ENCODE measurements at regions of chr2 and their contacts with region 1.

Region 1: DNA sequence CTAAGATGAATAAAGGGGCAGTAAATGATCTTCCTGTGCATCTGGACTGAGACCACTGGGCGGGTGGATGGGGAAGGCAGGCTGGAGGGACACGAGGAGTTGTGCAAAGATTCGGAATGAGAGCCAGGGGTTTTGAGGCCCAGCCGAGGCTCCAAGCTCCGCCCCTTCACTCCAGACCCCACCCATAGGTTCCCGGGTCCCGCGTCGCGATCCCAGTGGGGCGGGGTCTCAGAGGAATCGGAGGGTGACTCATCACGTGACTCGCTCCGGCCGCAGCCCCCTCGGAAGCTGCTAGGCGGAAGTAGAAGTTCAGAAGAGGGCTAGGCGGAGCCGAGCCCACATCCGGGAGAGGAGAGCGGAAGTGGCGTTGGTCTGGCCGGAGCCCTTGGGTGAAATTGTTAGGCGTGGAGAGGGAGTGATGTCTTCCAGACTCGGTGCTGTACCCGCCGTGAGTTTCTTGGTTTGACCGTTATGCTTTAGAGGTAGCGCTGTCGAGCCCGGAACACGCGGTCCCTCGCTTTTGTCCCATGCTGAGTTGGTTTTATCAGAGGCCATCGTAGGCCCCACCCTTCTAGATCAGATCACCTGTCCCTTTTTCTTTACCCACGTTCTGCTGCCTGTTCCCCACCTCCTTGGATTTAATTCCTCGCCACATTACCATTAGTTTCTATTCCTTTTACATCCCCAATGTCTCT is at the start of gene ZNF512:
- DNase-seq: peak; percentile 94
- H3K4me3 Mint-ChIP-seq: peak within 1 kb of the TSS; percentile 92
- H3K27ac Mint-ChIP-seq: peak within 1 kb of the TSS; percentile 88
- H3K4me1 Mint-ChIP-seq: peaks cover 43% of the 10 kb centered on the region
- H3K27me3 Mint-ChIP-seq: peaks cover 3% of the 10 kb centered on the region
- total RNA-seq, gene ZNF512: 29.0 and 32.7 TPM in 2 replicates

Region 2: GRCh38 chr2:27489498-27490397 is 93.1 kb before region 1 on chr2 and contains the start of gene IFT172:
- intact Hi-C with region 1: loop called (anchors 1 kb)
- DNase-seq: peak; percentile 100
- H3K4me3 Mint-ChIP-seq: peak within 1 kb of the TSS; percentile 84
- H3K27ac Mint-ChIP-seq: peak within 1 kb of the TSS; percentile 87
- H3K4me1 Mint-ChIP-seq: peaks cover 20% of the 10 kb centered on the region
- H3K27me3 Mint-ChIP-seq: peaks cover 18% of the 10 kb centered on the region
- total RNA-seq, gene IFT172: 12.4 and 12.9 TPM in 2 replicates

Region 3: DNA sequence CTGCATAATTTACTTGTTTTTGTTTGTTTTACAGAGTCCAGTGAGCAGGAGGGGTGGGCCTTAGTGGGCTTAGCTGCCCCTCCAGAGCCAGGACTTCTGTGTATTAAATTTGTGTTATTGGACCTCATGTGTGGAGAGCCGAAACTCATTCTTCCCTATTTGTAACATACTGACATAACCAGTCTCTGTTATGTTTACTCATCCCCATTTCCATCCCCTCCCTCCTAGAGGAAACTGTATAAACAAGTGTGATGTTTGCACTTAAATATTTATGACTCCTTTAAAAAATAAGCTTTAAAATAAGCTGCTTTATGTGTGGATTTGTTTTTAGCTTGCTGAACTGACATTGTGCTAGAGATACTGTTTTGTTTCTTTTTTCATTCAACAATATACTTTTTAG is 13.8 kb after region 1 on chr2:
- intact Hi-C with region 1: no loop called
- DNase-seq: no peak
- H3K4me3 Mint-ChIP-seq: no peak overlapping the region
- H3K27ac Mint-ChIP-seq: no peak overlapping the region
- H3K4me1 Mint-ChIP-seq: peaks cover 25% of the 10 kb centered on the region
- H3K27me3 Mint-ChIP-seq: no peaks in the 10 kb centered on the region

Region 4: DNA sequence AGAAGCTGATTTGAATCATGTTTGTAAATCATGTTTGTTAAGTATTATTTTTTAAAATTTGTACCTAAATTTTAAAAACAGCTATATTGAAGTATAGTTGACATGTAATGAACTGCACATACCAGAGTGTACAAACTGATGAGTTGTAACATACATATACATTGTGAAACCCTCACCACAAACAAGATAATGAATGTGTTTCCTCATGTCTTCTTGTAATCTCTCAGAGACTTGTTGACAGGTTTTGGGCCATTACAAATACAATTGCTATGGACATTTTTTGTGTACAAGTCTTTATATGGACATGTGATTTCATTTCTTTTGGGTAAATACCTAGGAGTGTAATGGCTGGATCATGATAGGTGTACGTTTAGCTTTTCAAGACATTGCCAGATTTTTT is 1333.1 kb after region 1 on chr2:
- intact Hi-C with region 1: no loop called
- DNase-seq: no peak
- H3K4me3 Mint-ChIP-seq: no peak overlapping the region
- H3K27ac Mint-ChIP-seq: peak overlapping the region; percentile 12
- H3K4me1 Mint-ChIP-seq: peaks cover 10% of the 10 kb centered on the region
- H3K27me3 Mint-ChIP-seq: no peaks in the 10 kb centered on the region

Measured in activated CD4-positive, alpha-beta T cell treated with anti-CD3 and anti-CD28 coated beads, Interleukin-2, amount 10 ng/mL, durations not matched to agents 24 days and 14 days (primary cell).